ENCODE measurements at regions of chr1 and their contacts with region 1.

Region 1: GRCh38 chr1:15949453-15950245 is 26.3 kb downstream of the ZBTB17 start:
- DNase-seq: peak; percentile 69
- H3K4me3 ChIP-seq: no peak overlapping the region
- H3K27ac ChIP-seq: peak overlapping the region; percentile 57
- H3K4me1 ChIP-seq: peaks cover 62% of the 10 kb centered on the region
- H3K27me3 ChIP-seq: no peaks in the 10 kb centered on the region
- CTCF ChIP-seq: no peak

Region 2: DNA sequence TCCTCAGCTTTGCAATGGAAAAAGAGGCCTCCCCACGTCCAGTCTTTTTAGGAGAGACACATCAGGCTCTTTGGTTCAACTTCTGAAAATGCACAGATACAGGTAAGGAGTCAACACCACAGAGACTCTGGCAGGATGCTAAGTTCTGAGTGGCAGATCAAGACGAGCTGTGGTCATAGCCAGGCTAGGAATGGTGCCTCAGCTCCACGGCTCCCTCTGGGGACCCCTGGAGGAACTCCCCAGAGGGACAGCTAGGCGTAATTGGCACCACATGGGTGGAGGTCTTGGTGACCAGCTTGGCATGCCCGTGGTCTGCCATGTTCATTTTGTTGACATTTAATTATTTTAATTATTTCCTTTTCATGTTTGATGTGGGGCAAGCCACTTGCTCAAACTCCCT is 1145.0 kb before region 1 on chr1:
- CTCF ChIA-PET with region 1: no interaction called
- POLR2A ChIA-PET with region 1: no interaction called
- intact Hi-C with region 1: no loop called
- DNase-seq: peak; percentile 30
- H3K4me3 ChIP-seq: no peak overlapping the region
- H3K27ac ChIP-seq: no peak overlapping the region
- H3K4me1 ChIP-seq: no peaks in the 10 kb centered on the region
- H3K27me3 ChIP-seq: no peaks in the 10 kb centered on the region
- CTCF ChIP-seq: peak; percentile 51; the same call in 1 of the 2 replicates

Region 3: GRCh38 chr1:15803354-15803753 is 146.3 kb before region 1 on chr1:
- CTCF ChIA-PET with region 1: interaction called, 4 read pairs
- POLR2A ChIA-PET with region 1: no interaction called
- intact Hi-C with region 1: loop called (anchors 5 kb)
- DNase-seq: peak; percentile 57
- H3K4me3 ChIP-seq: no peak overlapping the region
- H3K27ac ChIP-seq: no peak overlapping the region
- H3K4me1 ChIP-seq: peaks cover 7% of the 10 kb centered on the region
- H3K27me3 ChIP-seq: no peaks in the 10 kb centered on the region
- CTCF ChIP-seq: peak; percentile 61

Region 4: GRCh38 chr1:15810073-15810472 is 139.6 kb before region 1 on chr1:
- CTCF ChIA-PET with region 1: no interaction called
- POLR2A ChIA-PET with region 1: interaction called, 14 read pairs
- intact Hi-C with region 1: no loop called
- DNase-seq: no peak
- H3K4me3 ChIP-seq: no peak overlapping the region
- H3K27ac ChIP-seq: no peak overlapping the region
- H3K4me1 ChIP-seq: no peaks in the 10 kb centered on the region
- H3K27me3 ChIP-seq: no peaks in the 10 kb centered on the region
- CTCF ChIP-seq: no peak

Measured in A673 (cell line).